Ovary (tissue), 10 donors: ENCODE measurements at regions of chr5 and their contacts with region 1.

Region 1: GRCh38 chr5:88889189-88890069 is 6.4 kb upstream of the MEF2C start:
- DNase-seq: peak; percentile 81 to 88 (median 84)
- H3K4me3 ChIP-seq: peak overlapping the region; percentile 59
- H3K27ac ChIP-seq: peak overlapping the region; percentile 85 to 90
- H3K4me1 ChIP-seq: peaks cover 3% of the 10 kb centered on the region
- H3K27me3 ChIP-seq: no peaks in the 10 kb centered on the region
- CTCF ChIP-seq: no peak
- EP300 ChIP-seq: no peak
- POLR2A ChIP-seq: peak; percentile 54

Region 2: GRCh38 chr5:87277279-87277835 is 1612.1 kb before region 1 on chr5:
- intact Hi-C with region 1: loop called in 1 of 4 experiments (anchors 10 kb)
- DNase-seq: no peak
- H3K4me3 ChIP-seq: no peak overlapping the region
- H3K27ac ChIP-seq: no peak overlapping the region
- H3K4me1 ChIP-seq: peaks cover 4% of the 10 kb centered on the region
- H3K27me3 ChIP-seq: no peaks in the 10 kb centered on the region
- CTCF ChIP-seq: no peak
- EP300 ChIP-seq: no peak
- POLR2A ChIP-seq: no peak

Region 3: GRCh38 chr5:88940713-88941112 is 51.3 kb after region 1 on chr5:
- intact Hi-C with region 1: loop called in 1 of 4 experiments (anchors 10 kb)
- DNase-seq: no peak
- H3K4me3 ChIP-seq: no peak overlapping the region
- H3K27ac ChIP-seq: no peak overlapping the region
- H3K4me1 ChIP-seq: peaks cover 10% of the 10 kb centered on the region
- H3K27me3 ChIP-seq: no peaks in the 10 kb centered on the region
- CTCF ChIP-seq: no peak
- EP300 ChIP-seq: no peak
- POLR2A ChIP-seq: no peak

Region 4: GRCh38 chr5:89055695-89056085 is 166.3 kb after region 1 on chr5:
- intact Hi-C with region 1: no loop called
- DNase-seq: no peak
- H3K4me3 ChIP-seq: no peak overlapping the region
- H3K27ac ChIP-seq: no peak overlapping the region
- H3K4me1 ChIP-seq: no peaks in the 10 kb centered on the region
- H3K27me3 ChIP-seq: no peaks in the 10 kb centered on the region
- CTCF ChIP-seq: no peak
- EP300 ChIP-seq: no peak
- POLR2A ChIP-seq: no peak

Region 5: GRCh38 chr5:89179731-89180130 is 290.3 kb after region 1 on chr5:
- intact Hi-C with region 1: no loop called
- DNase-seq: no peak
- H3K4me3 ChIP-seq: no peak overlapping the region
- H3K27ac ChIP-seq: no peak overlapping the region
- H3K4me1 ChIP-seq: no peaks in the 10 kb centered on the region
- H3K27me3 ChIP-seq: no peaks in the 10 kb centered on the region
- CTCF ChIP-seq: no peak
- EP300 ChIP-seq: no peak
- POLR2A ChIP-seq: no peak

Region 6: GRCh38 chr5:89241186-89241585 is 351.8 kb after region 1 on chr5:
- intact Hi-C with region 1: no loop called
- DNase-seq: no peak
- H3K4me3 ChIP-seq: no peak overlapping the region
- H3K27ac ChIP-seq: no peak overlapping the region
- H3K4me1 ChIP-seq: no peaks in the 10 kb centered on the region
- H3K27me3 ChIP-seq: no peaks in the 10 kb centered on the region
- CTCF ChIP-seq: no peak
- EP300 ChIP-seq: no peak
- POLR2A ChIP-seq: no peak